ENCODE measurements at regions of chr15 and their contacts with region 1.

Region 1: DNA sequence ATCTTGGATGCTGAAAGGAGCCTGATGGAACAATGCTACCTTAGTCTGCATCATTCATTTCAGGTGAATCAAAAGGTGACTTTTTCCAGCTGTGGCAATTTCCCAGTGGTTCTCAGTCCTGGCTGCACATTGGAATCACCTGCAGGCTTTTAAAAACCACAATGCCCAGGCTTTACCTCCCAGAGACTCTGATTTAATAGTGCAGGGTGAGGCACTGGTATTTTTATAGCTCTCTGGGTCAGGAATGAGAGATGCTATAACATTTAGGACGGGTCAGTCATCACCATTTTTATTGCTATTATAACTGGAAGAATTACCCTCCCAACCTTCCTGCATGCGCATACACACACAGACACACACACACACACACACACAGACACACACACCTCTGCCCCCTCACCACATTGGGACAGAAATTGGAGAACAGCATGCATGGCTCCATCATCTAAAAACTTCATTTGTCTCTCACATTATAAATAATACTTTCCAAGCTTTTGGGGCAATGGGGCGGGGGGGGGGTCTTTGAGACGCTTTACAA is 41.1 kb downstream of the LARP6 start:
- DNase-seq: no peak

Region 2: GRCh38 chr15:70679919-70680231 is 133.0 kb before region 1 on chr15:
- intact Hi-C with region 1: loop called (anchors 2 kb)
- DNase-seq: no peak

Measured in posterior cingulate gyrus (tissue), 11 donors.